CD4-positive, alpha-beta T cell (primary cell): ENCODE measurements at regions of chr12 and their contacts with region 1.

Region 1: GRCh38 chr12:31896514-31897039 is 62.6 kb upstream of the RESF1 start:
- DNase-seq: peak; percentile 63 to 97 (median 78)
- ATAC-seq: peak; percentile 96
- H3K4me3 ChIP-seq: no peak overlapping the region
- H3K4me3 Mint-ChIP-seq: peak overlapping the region; percentile 74
- H3K27ac ChIP-seq: peak overlapping the region; percentile 71 to 82
- H3K27ac Mint-ChIP-seq: peak overlapping the region; percentile 93
- H3K4me1 ChIP-seq: peaks cover 69% of the 10 kb centered on the region
- H3K4me1 Mint-ChIP-seq: peaks cover 47% of the 10 kb centered on the region
- H3K27me3 ChIP-seq: no peaks in the 10 kb centered on the region
- H3K27me3 Mint-ChIP-seq: no peaks in the 10 kb centered on the region
- CTCF ChIP-seq: no peak

Region 2: DNA sequence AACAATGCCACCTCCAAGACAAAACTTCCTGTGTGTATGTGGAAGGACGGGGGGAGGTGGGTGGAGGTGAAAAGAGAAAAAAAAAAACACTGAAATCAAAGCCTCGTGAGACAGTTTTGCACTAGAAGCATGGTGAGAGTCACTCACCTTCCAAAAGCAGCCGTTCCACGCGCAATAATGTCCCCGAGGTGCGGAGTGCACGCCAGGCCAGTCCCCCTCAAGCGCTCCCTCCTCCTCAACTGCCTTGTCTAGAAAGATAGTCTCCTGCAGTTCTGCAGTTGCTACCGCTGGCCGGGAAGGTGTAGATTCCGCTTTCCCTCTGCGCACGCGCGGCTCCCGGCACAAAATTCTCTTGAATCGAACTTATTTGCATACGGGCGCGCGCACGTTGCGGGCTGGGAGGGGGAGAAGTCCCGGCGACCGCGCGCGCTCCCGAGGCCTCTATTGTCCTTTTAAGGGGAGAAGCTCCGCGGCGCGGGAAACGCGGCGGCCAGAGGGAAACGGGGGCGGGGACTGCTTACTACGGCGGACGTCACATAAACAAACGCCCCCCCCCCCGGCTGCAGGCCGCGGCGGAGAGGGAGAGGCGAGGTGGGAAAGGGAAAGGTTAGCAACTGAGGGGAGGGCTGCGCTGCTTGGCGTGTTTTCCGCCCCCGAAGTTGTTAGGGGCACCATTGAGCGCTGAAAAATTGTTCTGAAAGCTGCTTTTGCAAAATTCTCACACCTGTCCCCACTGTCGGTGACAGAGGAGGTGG is 570.5 kb before region 1 on chr12 and contains the start of gene SINHCAF:
- CTCF ChIA-PET with region 1: no interaction called
- POLR2A ChIA-PET with region 1: interaction called, 4 read pairs
- intact Hi-C with region 1: loop called in 1 of 2 experiments (anchors 1 kb)
- DNase-seq: peak; percentile 96 to 100 (median 99)
- ATAC-seq: peak; percentile 52
- H3K4me3 ChIP-seq: peak within 1 kb of the TSS; percentile 99
- H3K4me3 Mint-ChIP-seq: peak within 1 kb of the TSS; percentile 92
- H3K27ac ChIP-seq: peak within 1 kb of the TSS; percentile 77 to 95
- H3K27ac Mint-ChIP-seq: peak within 1 kb of the TSS; percentile 85
- H3K4me1 ChIP-seq: peaks cover 27% of the 10 kb centered on the region
- H3K4me1 Mint-ChIP-seq: peaks cover 32% of the 10 kb centered on the region
- H3K27me3 ChIP-seq: no peaks in the 10 kb centered on the region
- H3K27me3 Mint-ChIP-seq: no peaks in the 10 kb centered on the region
- CTCF ChIP-seq: no peak
- total RNA-seq, gene SINHCAF: 103 to 119 TPM

Region 3: GRCh38 chr12:31832740-31833729 is 63.5 kb before region 1 on chr12:
- CTCF ChIA-PET with region 1: no interaction called
- POLR2A ChIA-PET with region 1: interaction called, 4 read pairs
- intact Hi-C with region 1: loop called (anchors 5 to 10 kb)
- DNase-seq: peak in 13 of 14 experiments; percentile 1 to 79 (median 10)
- ATAC-seq: peak; percentile 77
- H3K4me3 ChIP-seq: no peak overlapping the region
- H3K4me3 Mint-ChIP-seq: peak overlapping the region; percentile 45
- H3K27ac ChIP-seq: peak overlapping the region in 1 of 2 donors; percentile 19
- H3K27ac Mint-ChIP-seq: peak overlapping the region; percentile 84
- H3K4me1 ChIP-seq: peaks cover 28% of the 10 kb centered on the region
- H3K4me1 Mint-ChIP-seq: peaks cover 53% of the 10 kb centered on the region
- H3K27me3 ChIP-seq: no peaks in the 10 kb centered on the region
- H3K27me3 Mint-ChIP-seq: no peaks in the 10 kb centered on the region
- CTCF ChIP-seq: no peak

Region 4: GRCh38 chr12:31922341-31923062 is 25.9 kb after region 1 on chr12:
- CTCF ChIA-PET with region 1: no interaction called
- POLR2A ChIA-PET with region 1: interaction called, 4 read pairs
- intact Hi-C with region 1: loop called (anchors 1 to 5 kb)
- DNase-seq: no peak
- ATAC-seq: no peak
- H3K4me3 ChIP-seq: no peak overlapping the region
- H3K4me3 Mint-ChIP-seq: no peak overlapping the region
- H3K27ac ChIP-seq: no peak overlapping the region
- H3K27ac Mint-ChIP-seq: no peak overlapping the region
- H3K4me1 ChIP-seq: peaks cover 2% of the 10 kb centered on the region
- H3K4me1 Mint-ChIP-seq: peaks cover 2% of the 10 kb centered on the region
- H3K27me3 ChIP-seq: no peaks in the 10 kb centered on the region
- H3K27me3 Mint-ChIP-seq: no peaks in the 10 kb centered on the region
- CTCF ChIP-seq: no peak

Region 5: GRCh38 chr12:31985832-31986231 is 89.3 kb after region 1 on chr12:
- CTCF ChIA-PET with region 1: no interaction called
- POLR2A ChIA-PET with region 1: interaction called, 5 read pairs
- intact Hi-C with region 1: loop called in 1 of 2 experiments (anchors 2 kb)
- DNase-seq: no peak
- ATAC-seq: no peak
- H3K4me3 ChIP-seq: no peak overlapping the region
- H3K4me3 Mint-ChIP-seq: no peak overlapping the region
- H3K27ac ChIP-seq: no peak overlapping the region
- H3K27ac Mint-ChIP-seq: peak overlapping the region; percentile 22
- H3K4me1 ChIP-seq: no peaks in the 10 kb centered on the region
- H3K4me1 Mint-ChIP-seq: peaks cover 54% of the 10 kb centered on the region
- H3K27me3 ChIP-seq: no peaks in the 10 kb centered on the region
- H3K27me3 Mint-ChIP-seq: no peaks in the 10 kb centered on the region
- CTCF ChIP-seq: no peak

Region 6: GRCh38 chr12:32455607-32456071 is 559.1 kb after region 1 on chr12:
- CTCF ChIA-PET with region 1: no interaction called
- POLR2A ChIA-PET with region 1: no interaction called
- intact Hi-C with region 1: no loop called
- DNase-seq: peak in 4 of 14 experiments; percentile 9 to 59 (median 54)
- ATAC-seq: no peak
- H3K4me3 ChIP-seq: no peak overlapping the region
- H3K4me3 Mint-ChIP-seq: no peak overlapping the region
- H3K27ac ChIP-seq: no peak overlapping the region
- H3K27ac Mint-ChIP-seq: no peak overlapping the region
- H3K4me1 ChIP-seq: no peaks in the 10 kb centered on the region
- H3K4me1 Mint-ChIP-seq: no peaks in the 10 kb centered on the region
- H3K27me3 ChIP-seq: peaks cover 0 to 5% of the 10 kb centered on the region in 2 experiments
- H3K27me3 Mint-ChIP-seq: no peaks in the 10 kb centered on the region
- CTCF ChIP-seq: peak; percentile 68